Activated CD4-positive, alpha-beta memory T cell treated with anti-CD3 and anti-CD28 coated beads for 36 hours (primary cell): ENCODE measurements at regions of chrX and their contacts with region 1.

Region 1: GRCh38 chrX:153032397-153033118 is 23.7 kb upstream of the PNMA3 start:
- DNase-seq: peak; percentile 81
- H3K4me3 Mint-ChIP-seq: peak overlapping the region; percentile 81
- H3K27ac Mint-ChIP-seq: peak overlapping the region; percentile 92
- H3K4me1 Mint-ChIP-seq: peaks cover 9% of the 10 kb centered on the region
- H3K27me3 Mint-ChIP-seq: no peaks in the 10 kb centered on the region

Region 2: GRCh38 chrX:152958524-152959465 is 73.8 kb before region 1 on chrX:
- CTCF ChIA-PET with region 1: no interaction called
- POLR2A ChIA-PET with region 1: no interaction called
- intact Hi-C with region 1: loop called (anchors 1 kb)
- DNase-seq: peak; percentile 93
- H3K4me3 Mint-ChIP-seq: peak overlapping the region; percentile 51
- H3K27ac Mint-ChIP-seq: peak overlapping the region; percentile 87
- H3K4me1 Mint-ChIP-seq: peaks cover 6% of the 10 kb centered on the region
- H3K27me3 Mint-ChIP-seq: no peaks in the 10 kb centered on the region

Region 3: GRCh38 chrX:153102436-153102835 is 69.9 kb after region 1 on chrX:
- CTCF ChIA-PET with region 1: no interaction called
- POLR2A ChIA-PET with region 1: no interaction called
- intact Hi-C with region 1: no loop called
- DNase-seq: no peak
- H3K4me3 Mint-ChIP-seq: no peak overlapping the region
- H3K27ac Mint-ChIP-seq: no peak overlapping the region
- H3K4me1 Mint-ChIP-seq: peaks cover 6% of the 10 kb centered on the region
- H3K27me3 Mint-ChIP-seq: no peaks in the 10 kb centered on the region

Region 4: DNA sequence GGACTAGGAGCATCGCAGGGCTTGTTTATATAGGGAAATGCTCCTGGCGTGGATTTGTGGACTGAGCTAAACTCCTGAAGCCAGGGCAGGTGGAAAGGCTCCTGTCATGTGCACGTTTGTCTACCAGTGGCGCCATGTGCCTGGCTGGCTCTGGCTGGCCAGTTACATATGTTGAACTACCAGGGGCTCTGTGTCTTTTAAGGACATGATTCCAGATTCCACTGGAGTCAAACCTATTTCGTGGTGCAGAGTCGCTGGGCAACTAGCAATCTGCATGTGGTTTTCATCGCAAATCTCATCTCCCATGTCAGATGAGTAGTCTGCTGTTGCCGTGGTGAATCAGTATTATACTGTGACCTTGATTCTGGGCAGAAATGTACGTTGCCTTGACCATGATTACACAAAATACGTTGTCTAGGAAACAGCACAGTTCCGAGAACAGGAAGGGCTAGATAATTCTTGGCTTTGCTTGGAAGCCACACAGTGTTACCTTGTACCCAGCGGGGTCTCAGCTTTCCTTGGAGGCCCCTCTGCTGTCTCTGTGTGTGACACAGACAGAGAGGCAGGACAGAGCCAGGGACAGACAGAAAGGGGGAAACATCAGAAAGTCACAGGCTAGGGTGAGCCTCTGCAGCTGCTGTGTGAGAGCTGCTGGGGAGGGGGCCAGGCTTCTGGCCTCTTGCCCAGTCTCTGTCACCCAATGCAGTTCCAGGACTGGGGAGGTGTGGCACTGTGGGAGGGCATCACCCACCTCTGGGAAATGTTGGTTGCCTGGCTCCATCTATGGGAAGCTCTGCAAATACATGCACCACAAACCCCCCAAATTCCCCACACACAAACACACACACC is 349.4 kb after region 1 on chrX:
- CTCF ChIA-PET with region 1: interaction called, 4 read pairs
- POLR2A ChIA-PET with region 1: no interaction called
- intact Hi-C with region 1: loop called (anchors 5 kb)
- DNase-seq: peak; percentile 49
- H3K4me3 Mint-ChIP-seq: no peak overlapping the region
- H3K27ac Mint-ChIP-seq: no peak overlapping the region
- H3K4me1 Mint-ChIP-seq: no peaks in the 10 kb centered on the region
- H3K27me3 Mint-ChIP-seq: no peaks in the 10 kb centered on the region

Region 5: DNA sequence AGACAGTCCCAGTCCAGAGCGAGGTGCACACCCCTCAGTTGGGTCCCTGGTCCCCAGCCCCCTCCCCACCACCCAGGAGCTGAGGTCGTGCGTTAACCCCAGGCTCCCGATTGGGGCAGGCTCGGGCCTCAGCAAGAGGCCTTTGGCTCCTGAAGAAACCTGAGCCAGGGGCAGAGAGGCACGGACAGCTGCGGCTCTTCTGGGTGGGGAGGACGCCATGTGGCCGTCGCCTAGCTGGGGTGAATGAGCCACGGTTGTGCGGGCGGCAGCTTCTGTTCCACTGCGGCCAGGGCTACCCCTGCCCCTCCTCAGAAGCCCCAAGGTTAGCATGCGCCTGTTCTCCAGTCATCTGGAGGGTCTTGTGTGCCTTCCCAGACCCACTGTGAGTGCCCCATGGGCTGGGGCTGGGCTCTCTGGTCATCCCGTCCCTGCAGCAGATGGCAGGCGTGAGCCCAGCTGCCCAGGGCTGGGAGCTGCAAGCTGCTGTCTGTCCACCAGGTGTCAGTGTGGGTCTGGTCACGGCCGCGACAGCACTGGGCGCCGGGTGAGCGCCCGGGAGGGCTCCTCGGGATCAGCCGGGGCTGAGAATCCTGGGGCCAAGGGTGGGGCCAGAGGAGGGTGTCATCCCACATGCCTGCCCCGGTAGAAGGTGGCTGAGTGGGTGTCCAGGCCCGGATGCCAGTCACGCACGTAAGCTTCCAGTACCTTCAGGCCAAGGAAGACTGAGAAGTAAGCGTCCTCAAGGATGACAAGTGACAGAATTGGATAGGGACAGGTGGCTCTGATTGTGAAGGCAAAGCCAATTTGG is 506.8 kb after region 1 on chrX:
- CTCF ChIA-PET with region 1: interaction called, 13 read pairs
- POLR2A ChIA-PET with region 1: no interaction called
- intact Hi-C with region 1: no loop called
- DNase-seq: peak; percentile 69
- H3K4me3 Mint-ChIP-seq: no peak overlapping the region
- H3K27ac Mint-ChIP-seq: no peak overlapping the region
- H3K4me1 Mint-ChIP-seq: no peaks in the 10 kb centered on the region
- H3K27me3 Mint-ChIP-seq: peaks cover 2% of the 10 kb centered on the region